ENCODE measurements at regions of chr15 and their contacts with region 1.

Region 1: GRCh38 chr15:43185157-43186017 is at the start of gene CCNDBP1:
- DNase-seq: peak; percentile 99
- ATAC-seq: peak; percentile 97
- H3K4me3 ChIP-seq: peak within 1 kb of the TSS; percentile 70
- H3K27ac ChIP-seq: peak within 1 kb of the TSS; percentile 83
- H3K4me1 ChIP-seq: peaks cover 12 to 15% of the 10 kb centered on the region in 2 experiments
- H3K27me3 ChIP-seq: no peaks in the 10 kb centered on the region
- CTCF ChIP-seq: peak; percentile 42 to 69 (median 45)
- EP300 ChIP-seq: peak; percentile 27; the same call in 1 of the 2 replicates
- POLR2A ChIP-seq: peak; percentile 89
- RAD21 ChIP-seq: 0 out of 4 replicates have a peak, but pooled peaks of 1 of the 2 experiments have one; percentile 6
- polyA plus RNA-seq, gene CCNDBP1: 37.0 to 44.7 TPM

Region 2: GRCh38 chr15:42704492-42704926 is 480.9 kb before region 1 on chr15:
- CTCF ChIA-PET with region 1: no interaction called
- POLR2A ChIA-PET with region 1: no interaction called
- in situ Hi-C with region 1: no loop called
- intact Hi-C with region 1: loop called (anchors 5 kb)
- DNase-seq: peak; percentile 69 to 82 (median 76)
- ATAC-seq: peak; percentile 100
- H3K4me3 ChIP-seq: no peak overlapping the region
- H3K27ac ChIP-seq: no peak overlapping the region
- H3K4me1 ChIP-seq: no peaks in the 10 kb centered on the region
- H3K27me3 ChIP-seq: no peaks in the 10 kb centered on the region
- CTCF ChIP-seq: peak; percentile 90 to 94 (median 90)
- EP300 ChIP-seq: no peak
- POLR2A ChIP-seq: no peak
- RAD21 ChIP-seq: peak; percentile 82 to 88

Region 3: GRCh38 chr15:43105778-43106485 is 79.5 kb before region 1 on chr15 and contains the start of gene UBR1:
- CTCF ChIA-PET with region 1: no interaction called
- POLR2A ChIA-PET with region 1: no interaction called
- in situ Hi-C with region 1: no loop called
- intact Hi-C with region 1: loop called (anchors 10 kb)
- DNase-seq: peak; percentile 87 to 96 (median 91)
- ATAC-seq: peak; percentile 91
- H3K4me3 ChIP-seq: peak within 1 kb of the TSS; percentile 69
- H3K27ac ChIP-seq: peak within 1 kb of the TSS; percentile 89
- H3K4me1 ChIP-seq: peaks cover 0 to 25% of the 10 kb centered on the region in 2 experiments; a peak in 3 of 5 replicates
- H3K27me3 ChIP-seq: no peaks in the 10 kb centered on the region
- CTCF ChIP-seq: no peak
- EP300 ChIP-seq: 0 out of 2 replicates have a peak, but pooled peaks have one; percentile 6
- POLR2A ChIP-seq: peak; percentile 92
- RAD21 ChIP-seq: no peak
- polyA plus RNA-seq, gene UBR1: 5.8 to 7.1 TPM

Measured in K562 (cell line).